ENCODE measurements at regions of chr19 and their contacts with region 1.

Region 1: DNA sequence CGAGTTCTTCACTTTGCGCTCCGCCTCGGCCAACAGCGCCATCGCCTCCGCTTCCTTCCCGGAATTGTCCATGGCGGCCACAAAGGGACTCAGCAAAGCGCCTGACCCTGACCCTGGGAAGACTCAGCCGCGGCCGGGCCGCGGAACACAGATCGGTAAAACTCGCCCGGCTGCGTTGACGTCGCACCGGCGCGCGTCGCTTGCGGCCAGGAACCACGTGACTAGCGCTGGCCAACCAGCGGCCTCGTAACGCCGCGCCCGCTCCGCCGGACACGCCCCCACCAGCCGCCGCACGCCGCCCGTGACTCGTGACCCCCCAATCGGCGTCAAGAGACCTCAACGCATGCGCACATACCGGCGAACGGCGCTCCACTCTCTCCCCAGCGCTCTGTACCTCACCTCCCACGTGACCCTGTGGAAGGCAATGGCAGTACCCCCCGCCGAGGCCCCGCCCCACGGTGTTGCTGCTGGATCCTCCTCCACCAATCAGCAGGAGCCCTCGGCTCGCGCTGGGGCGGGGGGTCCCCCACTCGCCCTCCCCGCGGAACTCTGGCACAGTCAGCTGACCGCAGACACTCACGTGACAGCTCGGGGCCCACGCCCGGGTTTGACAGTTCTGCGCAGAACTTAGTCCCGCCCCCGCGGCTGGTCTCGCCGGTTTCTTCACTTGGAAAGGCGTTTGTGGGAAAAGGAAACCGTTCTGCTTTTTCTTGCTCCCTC is at the start of gene NAPA:
- DNase-seq: peak; percentile 99 to 100 (median 100)
- ATAC-seq: peak; percentile 96
- H3K4me3 ChIP-seq: peak within 1 kb of the TSS; percentile 97
- H3K4me3 Mint-ChIP-seq: peak within 1 kb of the TSS; percentile 81 to 100 (median 98)
- H3K27ac ChIP-seq: peak within 1 kb of the TSS; percentile 100
- H3K27ac Mint-ChIP-seq: peak within 1 kb of the TSS; percentile 81 to 99 (median 98)
- H3K4me1 ChIP-seq: peaks cover 50 to 64% of the 10 kb centered on the region in 2 donors
- H3K4me1 Mint-ChIP-seq: peaks cover 64 to 97% (median 92%) of the 10 kb centered on the region in 7 donors
- H3K27me3 ChIP-seq: no peaks in the 10 kb centered on the region
- H3K27me3 Mint-ChIP-seq: peaks cover 0 to 6% (median 0%) of the 10 kb centered on the region in 5 donors
- total RNA-seq, gene NAPA: 86.2 to 136 (median 107) TPM

Region 2: GRCh38 chr19:47436712-47437401 is 78.2 kb before region 1 on chr19:
- CTCF ChIA-PET with region 1: interaction called, 3 read pairs
- POLR2A ChIA-PET with region 1: no interaction called
- intact Hi-C with region 1: loop called (anchors 1 kb)
- DNase-seq: peak; percentile 67 to 91 (median 79)
- ATAC-seq: peak; percentile 98
- H3K4me3 ChIP-seq: no peak overlapping the region
- H3K4me3 Mint-ChIP-seq: peak overlapping the region in 8 of 10 donors; percentile 17 to 72 (median 36)
- H3K27ac ChIP-seq: no peak overlapping the region
- H3K27ac Mint-ChIP-seq: peak overlapping the region in 6 of 9 donors; percentile 12 to 87 (median 55)
- H3K4me1 ChIP-seq: no peaks in the 10 kb centered on the region
- H3K4me1 Mint-ChIP-seq: peaks cover 18 to 32% (median 20%) of the 10 kb centered on the region in 7 donors
- H3K27me3 ChIP-seq: no peaks in the 10 kb centered on the region
- H3K27me3 Mint-ChIP-seq: peaks cover 21 to 55% (median 45%) of the 10 kb centered on the region in 5 donors

Region 3: GRCh38 chr19:47471733-47472457 is 43.1 kb before region 1 on chr19 and contains the start of gene SLC8A2:
- CTCF ChIA-PET with region 1: no interaction called
- POLR2A ChIA-PET with region 1: no interaction called
- intact Hi-C with region 1: no loop called
- DNase-seq: peak; percentile 42 to 84 (median 70)
- ATAC-seq: peak; percentile 93
- H3K4me3 ChIP-seq: no peak within 1 kb of the TSS
- H3K4me3 Mint-ChIP-seq: peak within 1 kb of the TSS in 9 of 10 donors; percentile 42 to 77 (median 67)
- H3K27ac ChIP-seq: no peak within 1 kb of the TSS
- H3K27ac Mint-ChIP-seq: peak within 1 kb of the TSS in 4 of 9 donors; percentile 25 to 80 (median 58)
- H3K4me1 ChIP-seq: no peaks in the 10 kb centered on the region
- H3K4me1 Mint-ChIP-seq: peaks cover 10 to 20% (median 17%) of the 10 kb centered on the region in 7 donors
- H3K27me3 ChIP-seq: peaks cover 6 to 7% of the 10 kb centered on the region in 2 donors
- H3K27me3 Mint-ChIP-seq: peaks cover 39 to 57% (median 48%) of the 10 kb centered on the region in 5 donors
- total RNA-seq, gene SLC8A2: 0.05 to 0.19 (median 0.19) TPM in 3 of 5 experiments, not detected in the others

Region 4: DNA sequence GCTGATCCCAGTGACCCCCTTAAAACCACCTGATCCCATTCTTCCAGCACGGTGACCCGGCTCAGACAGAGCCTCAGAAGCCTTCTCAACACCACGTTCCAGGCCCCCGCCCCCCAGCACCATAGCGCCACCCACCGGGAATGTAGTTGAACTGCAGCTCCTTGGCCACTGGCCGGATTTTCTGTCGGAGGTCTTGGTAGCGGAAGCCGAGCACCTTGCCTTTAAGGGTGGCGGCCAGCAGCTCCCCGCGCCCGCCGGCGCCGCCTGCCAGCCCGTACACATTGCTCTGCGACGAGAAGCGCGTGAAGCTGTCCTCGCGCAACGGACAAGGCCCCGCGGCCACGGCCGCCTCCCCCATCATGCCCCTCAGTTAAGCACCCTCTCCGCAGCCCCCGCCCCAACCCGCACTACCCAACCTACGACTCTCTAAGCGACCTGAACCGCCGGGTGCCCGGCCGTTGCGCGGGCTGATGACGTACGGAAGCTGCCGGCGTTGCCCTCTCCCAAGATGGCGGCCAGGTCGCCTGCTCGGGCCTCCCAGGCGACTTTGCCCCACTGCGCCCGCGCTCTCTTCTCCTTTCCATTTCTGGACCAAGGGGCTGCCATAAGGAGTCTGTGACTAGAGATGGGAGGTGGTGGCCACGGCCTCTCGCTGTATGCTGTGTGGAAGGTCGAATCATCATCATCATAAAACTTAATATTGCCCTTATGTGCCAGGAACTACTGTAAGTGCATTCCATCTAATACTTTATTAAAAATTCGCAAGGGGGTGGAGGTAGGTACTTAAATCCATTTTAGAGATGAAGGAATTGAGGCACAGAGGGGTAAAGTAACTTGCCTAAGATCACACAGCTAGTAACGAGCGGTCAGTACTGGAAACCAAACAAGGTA is 31.0 kb before region 1 on chr19 and contains the start of gene KPTN:
- CTCF ChIA-PET with region 1: interaction called, 5 read pairs
- POLR2A ChIA-PET with region 1: interaction called, 21 read pairs
- intact Hi-C with region 1: loop called (anchors 1 kb)
- DNase-seq: peak; percentile 85 to 92 (median 88)
- ATAC-seq: peak; percentile 91
- H3K4me3 ChIP-seq: peak within 1 kb of the TSS; percentile 74
- H3K4me3 Mint-ChIP-seq: peak within 1 kb of the TSS; percentile 83 to 99 (median 96)
- H3K27ac ChIP-seq: peak within 1 kb of the TSS; percentile 96
- H3K27ac Mint-ChIP-seq: peak within 1 kb of the TSS; percentile 94 to 99 (median 97)
- H3K4me1 ChIP-seq: peaks cover 18% of the 10 kb centered on the region in 2 donors
- H3K4me1 Mint-ChIP-seq: peaks cover 22 to 39% (median 30%) of the 10 kb centered on the region in 7 donors
- H3K27me3 ChIP-seq: no peaks in the 10 kb centered on the region
- H3K27me3 Mint-ChIP-seq: peaks cover 0 to 4% (median 0%) of the 10 kb centered on the region in 5 donors
- total RNA-seq, gene KPTN: 5.1 to 9.2 (median 6.7) TPM

Region 5: GRCh38 chr19:47600246-47601179 is 85.5 kb after region 1 on chr19:
- CTCF ChIA-PET with region 1: interaction called, 8 read pairs
- POLR2A ChIA-PET with region 1: interaction called, 15 read pairs
- intact Hi-C with region 1: loop called (anchors 1 kb)
- DNase-seq: peak; percentile 86 to 99 (median 97)
- ATAC-seq: peak; percentile 98
- H3K4me3 ChIP-seq: peak overlapping the region; percentile 93
- H3K4me3 Mint-ChIP-seq: peak overlapping the region; percentile 79 to 91 (median 84)
- H3K27ac ChIP-seq: peak overlapping the region; percentile 81
- H3K27ac Mint-ChIP-seq: peak overlapping the region; percentile 75 to 94 (median 90)
- H3K4me1 ChIP-seq: peaks cover 0 to 7% of the 10 kb centered on the region in 2 donors
- H3K4me1 Mint-ChIP-seq: peaks cover 6 to 43% (median 21%) of the 10 kb centered on the region in 7 donors
- H3K27me3 ChIP-seq: no peaks in the 10 kb centered on the region
- H3K27me3 Mint-ChIP-seq: peaks cover 0 to 2% (median 0%) of the 10 kb centered on the region in 5 donors

Region 6: GRCh38 chr19:47697863-47698609 is 183.0 kb after region 1 on chr19:
- CTCF ChIA-PET with region 1: interaction called, 3 read pairs
- POLR2A ChIA-PET with region 1: no interaction called
- intact Hi-C with region 1: loop called in 1 of 2 experiments (anchors 1 kb)
- DNase-seq: peak; percentile 10 to 59 (median 41)
- ATAC-seq: peak; percentile 76
- H3K4me3 ChIP-seq: no peak overlapping the region
- H3K4me3 Mint-ChIP-seq: no peak overlapping the region
- H3K27ac ChIP-seq: no peak overlapping the region
- H3K27ac Mint-ChIP-seq: peak overlapping the region in 2 of 9 donors; percentile 9 to 12
- H3K4me1 ChIP-seq: no peaks in the 10 kb centered on the region
- H3K4me1 Mint-ChIP-seq: peaks cover 0 to 6% (median 3%) of the 10 kb centered on the region in 7 donors
- H3K27me3 ChIP-seq: no peaks in the 10 kb centered on the region
- H3K27me3 Mint-ChIP-seq: no peaks in the 10 kb centered on the region

Region 7: DNA sequence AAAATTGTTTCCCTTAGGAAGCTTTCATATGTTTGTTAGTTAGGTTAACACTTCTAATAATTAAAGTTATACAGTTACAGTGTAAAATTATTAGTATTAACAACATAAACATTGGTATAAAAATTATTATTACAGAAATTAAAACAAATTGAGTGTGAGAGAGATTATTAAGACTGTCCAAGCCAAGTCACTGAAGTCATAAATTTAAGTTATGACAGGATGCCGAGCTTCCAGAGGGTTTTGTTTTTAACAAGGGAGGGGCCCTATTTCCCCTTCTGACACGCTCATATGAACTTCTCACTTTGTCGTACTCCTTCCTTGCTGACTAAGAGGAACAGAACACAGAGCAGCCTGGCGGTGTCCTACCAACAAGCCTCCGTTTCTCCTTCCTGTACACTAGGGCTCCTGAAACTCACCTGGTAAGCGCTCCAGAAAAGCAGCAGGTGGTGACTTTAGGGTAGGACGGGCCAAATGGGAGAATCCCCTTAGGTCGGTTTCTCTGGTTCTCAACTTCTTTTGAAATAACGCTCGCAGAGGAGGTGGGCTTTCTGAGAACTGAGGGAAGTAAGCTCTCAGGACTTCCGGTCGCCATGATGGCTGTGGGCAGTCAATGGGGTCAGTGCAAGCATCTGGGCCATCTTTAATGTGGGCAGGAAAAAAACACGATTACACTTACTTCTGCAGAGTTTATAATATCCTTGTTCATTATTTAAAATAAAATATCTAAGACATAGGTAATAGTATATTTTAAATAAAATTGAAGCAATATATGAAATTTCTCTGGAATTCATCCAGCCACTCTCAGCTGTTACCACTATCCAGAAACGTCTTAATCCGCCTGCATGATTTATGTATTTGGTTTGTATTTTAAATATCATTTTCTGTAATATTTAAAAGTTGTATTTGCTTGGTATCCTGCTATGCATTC is 740.6 kb after region 1 on chr19 and contains the start of gene CARD8:
- CTCF ChIA-PET with region 1: no interaction called
- POLR2A ChIA-PET with region 1: no interaction called
- intact Hi-C with region 1: loop called in 1 of 2 experiments (anchors 5 kb)
- DNase-seq: peak; percentile 54 to 91 (median 84)
- ATAC-seq: peak; percentile 85
- H3K4me3 ChIP-seq: peak within 1 kb of the TSS; percentile 100
- H3K4me3 Mint-ChIP-seq: peak within 1 kb of the TSS; percentile 74 to 100 (median 99)
- H3K27ac ChIP-seq: peak within 1 kb of the TSS; percentile 88
- H3K27ac Mint-ChIP-seq: peak within 1 kb of the TSS; percentile 90 to 100 (median 97)
- H3K4me1 ChIP-seq: peaks cover 53 to 56% of the 10 kb centered on the region in 2 donors
- H3K4me1 Mint-ChIP-seq: peaks cover 51 to 86% (median 76%) of the 10 kb centered on the region in 7 donors
- H3K27me3 ChIP-seq: no peaks in the 10 kb centered on the region
- H3K27me3 Mint-ChIP-seq: no peaks in the 10 kb centered on the region
- total RNA-seq, gene CARD8: 104 to 301 (median 182) TPM